ENCODE measurements at regions of chr6 and their contacts with region 1.

Region 1: DNA sequence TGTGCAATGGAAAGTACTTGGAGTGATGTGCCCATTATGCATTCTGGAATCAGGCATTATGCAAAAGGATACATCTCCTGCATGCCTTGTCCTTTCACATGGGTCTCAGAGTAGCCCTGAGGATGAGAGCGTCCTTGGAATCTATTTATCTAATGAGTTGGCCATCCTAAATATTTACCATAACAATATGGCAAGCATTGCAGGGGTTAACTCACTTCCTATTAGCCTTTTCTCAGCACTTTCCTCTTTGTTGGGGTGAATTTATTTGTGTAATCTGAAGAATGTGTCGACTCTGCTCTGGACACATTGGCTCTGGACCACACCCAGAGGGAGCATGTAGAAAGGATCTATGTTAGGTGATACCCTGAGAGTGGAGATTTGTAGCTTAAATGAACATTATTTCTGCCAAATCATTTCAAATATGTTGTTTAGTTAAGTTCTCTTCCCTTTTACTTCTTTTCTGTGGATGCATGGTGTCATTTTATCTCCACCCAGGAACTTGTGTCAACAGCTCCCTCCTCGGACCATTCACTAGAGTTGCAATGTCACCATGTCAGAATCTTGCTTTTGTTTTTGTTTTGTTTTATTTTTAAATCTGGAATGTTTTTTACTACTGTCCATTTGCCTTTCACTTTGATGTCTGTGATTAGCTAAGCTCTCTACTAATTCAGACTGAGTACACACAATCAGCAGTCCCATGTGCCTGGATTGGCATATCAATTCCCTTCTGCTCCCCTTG is 757.0 kb upstream of the MMS22L start:
- DNase-seq: no peak
- H3K4me3 ChIP-seq: peak overlapping the region in 10 of 59 donors; percentile 3 to 35 (median 19)
- H3K27ac ChIP-seq: peak overlapping the region in 10 of 59 donors; percentile 4 to 50 (median 24)
- H3K27me3 ChIP-seq: peaks cover 0 to 3% (median 0%) of the 10 kb centered on the region in 45 donors
- CTCF ChIP-seq: peak in 53 of 56 donors; percentile 17 to 70 (median 49)

Region 2: GRCh38 chr6:97077380-97077779 is 962.7 kb before region 1 on chr6:
- intact Hi-C with region 1: loop called in 1 of 2 experiments (anchors 10 kb)
- DNase-seq: no peak
- H3K4me3 ChIP-seq: no peak overlapping the region
- H3K27ac ChIP-seq: peak overlapping the region in 1 of 59 donors; percentile 14
- H3K27me3 ChIP-seq: no peaks in the 10 kb centered on the region
- CTCF ChIP-seq: peak in 24 of 56 donors; percentile 7 to 50 (median 20)

Region 3: GRCh38 chr6:98514073-98514720 is 474.2 kb after region 1 on chr6:
- intact Hi-C with region 1: loop called in 1 of 2 experiments (anchors 10 kb)
- DNase-seq: no peak
- H3K4me3 ChIP-seq: no peak overlapping the region
- H3K27ac ChIP-seq: peak overlapping the region in 1 of 59 donors; percentile 3
- H3K27me3 ChIP-seq: no peaks in the 10 kb centered on the region
- CTCF ChIP-seq: peak in 49 of 56 donors; percentile 8 to 65 (median 41)

Measured in dorsolateral prefrontal cortex (tissue), 120 donors.